A549 (cell line): ENCODE measurements at regions of chr19 and their contacts with region 1.

Region 1: GRCh38 chr19:45558399-45558878 is 26.2 kb downstream of the OPA3 start:
- DNase-seq: peak; percentile 81 to 83
- ATAC-seq: peak; percentile 81 to 93
- H3K4me3 ChIP-seq: no peak overlapping the region
- H3K27ac ChIP-seq: no peak overlapping the region
- H3K4me1 ChIP-seq: no peaks in the 10 kb centered on the region
- CTCF ChIP-seq: peak; percentile 74
- EP300 ChIP-seq: no peak
- POLR2A ChIP-seq: no peak
- RAD21 ChIP-seq: peak; percentile 71 to 77

Region 2: GRCh38 chr19:45275370-45275971 is 283.0 kb before region 1 on chr19:
- CTCF ChIA-PET with region 1: no interaction called
- POLR2A ChIA-PET with region 1: no interaction called
- DNase-seq: no peak
- ATAC-seq: no peak
- H3K4me3 ChIP-seq: no peak overlapping the region
- H3K27ac ChIP-seq: no peak overlapping the region
- H3K4me1 ChIP-seq: no peaks in the 10 kb centered on the region
- CTCF ChIP-seq: no peak
- EP300 ChIP-seq: no peak
- POLR2A ChIP-seq: no peak
- RAD21 ChIP-seq: no peak

Region 3: DNA sequence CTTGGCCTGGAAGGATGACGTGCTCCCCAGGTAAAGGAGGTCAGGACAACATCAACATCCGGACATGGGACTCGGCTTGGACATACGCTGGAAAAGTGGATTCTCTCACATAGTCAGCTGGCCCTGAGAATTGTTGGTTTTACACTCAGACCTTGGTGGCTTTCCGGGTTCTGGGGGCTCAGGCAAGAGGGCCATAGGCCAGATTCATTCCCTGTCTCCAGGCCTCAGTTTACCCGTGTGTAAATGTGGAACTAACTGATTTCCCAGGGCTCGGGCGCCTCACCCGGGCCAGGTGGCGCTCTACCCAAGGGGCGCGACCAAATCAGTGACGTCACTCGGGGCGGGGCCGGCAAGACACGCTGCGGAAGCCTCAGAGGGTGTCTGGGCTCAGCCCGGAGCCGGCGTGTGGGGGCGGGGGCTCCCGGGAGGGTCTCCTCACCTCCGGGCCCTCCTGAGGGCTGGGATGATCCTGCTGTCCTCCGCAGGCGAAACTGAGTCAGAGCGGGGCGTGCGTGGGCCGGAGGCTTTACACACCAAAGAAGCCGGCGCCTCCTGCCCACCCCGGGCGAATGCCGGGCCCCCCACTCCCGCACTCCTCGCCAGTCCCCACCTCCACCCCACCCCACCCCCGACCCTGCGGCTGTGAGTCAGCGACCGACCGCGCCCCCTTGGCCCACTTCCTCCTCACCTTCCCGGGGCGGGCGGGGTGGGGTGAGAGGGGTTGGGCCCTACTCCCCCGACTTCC is 52.0 kb before region 1 on chr19:
- CTCF ChIA-PET with region 1: interaction called, 10 read pairs
- POLR2A ChIA-PET with region 1: no interaction called
- DNase-seq: peak; percentile 97 to 98
- ATAC-seq: peak; percentile 79 to 80
- H3K4me3 ChIP-seq: peak overlapping the region; percentile 70
- H3K27ac ChIP-seq: peak overlapping the region; percentile 99
- H3K4me1 ChIP-seq: peaks cover 28% of the 10 kb centered on the region
- CTCF ChIP-seq: peak; percentile 81
- EP300 ChIP-seq: peak; percentile 17 to 30; a peak in 1 of 5 replicates
- POLR2A ChIP-seq: peak; percentile 78
- RAD21 ChIP-seq: peak; percentile 48 to 59

Region 4: GRCh38 chr19:45528651-45529419 is 29.6 kb before region 1 on chr19:
- CTCF ChIA-PET with region 1: interaction called, 24 read pairs
- POLR2A ChIA-PET with region 1: no interaction called
- DNase-seq: peak in 1 of 2 experiments; percentile 63
- ATAC-seq: peak; percentile 24 to 46; a peak in 3 of 6 replicates
- H3K4me3 ChIP-seq: no peak overlapping the region
- H3K27ac ChIP-seq: no peak overlapping the region
- H3K4me1 ChIP-seq: no peaks in the 10 kb centered on the region
- CTCF ChIP-seq: no peak
- EP300 ChIP-seq: no peak
- POLR2A ChIP-seq: no peak
- RAD21 ChIP-seq: no peak

Region 5: GRCh38 chr19:45547976-45548609 is 10.3 kb before region 1 on chr19:
- CTCF ChIA-PET with region 1: interaction called, 23 read pairs
- POLR2A ChIA-PET with region 1: interaction called, 4 read pairs
- DNase-seq: peak; percentile 91 to 93
- ATAC-seq: peak; percentile 92 to 93
- H3K4me3 ChIP-seq: no peak overlapping the region
- H3K27ac ChIP-seq: peak overlapping the region; percentile 68 to 84
- H3K4me1 ChIP-seq: peaks cover 16% of the 10 kb centered on the region
- CTCF ChIP-seq: no peak
- EP300 ChIP-seq: no peak
- POLR2A ChIP-seq: no peak
- RAD21 ChIP-seq: no peak